ENCODE measurements at regions of chr6 and their contacts with region 1.

Region 1: GRCh38 chr6:150079604-150080003 is 10.7 kb upstream of the ULBP3 start:
- DNase-seq: peak in 1 of 10 donors; percentile 82

Region 2: DNA sequence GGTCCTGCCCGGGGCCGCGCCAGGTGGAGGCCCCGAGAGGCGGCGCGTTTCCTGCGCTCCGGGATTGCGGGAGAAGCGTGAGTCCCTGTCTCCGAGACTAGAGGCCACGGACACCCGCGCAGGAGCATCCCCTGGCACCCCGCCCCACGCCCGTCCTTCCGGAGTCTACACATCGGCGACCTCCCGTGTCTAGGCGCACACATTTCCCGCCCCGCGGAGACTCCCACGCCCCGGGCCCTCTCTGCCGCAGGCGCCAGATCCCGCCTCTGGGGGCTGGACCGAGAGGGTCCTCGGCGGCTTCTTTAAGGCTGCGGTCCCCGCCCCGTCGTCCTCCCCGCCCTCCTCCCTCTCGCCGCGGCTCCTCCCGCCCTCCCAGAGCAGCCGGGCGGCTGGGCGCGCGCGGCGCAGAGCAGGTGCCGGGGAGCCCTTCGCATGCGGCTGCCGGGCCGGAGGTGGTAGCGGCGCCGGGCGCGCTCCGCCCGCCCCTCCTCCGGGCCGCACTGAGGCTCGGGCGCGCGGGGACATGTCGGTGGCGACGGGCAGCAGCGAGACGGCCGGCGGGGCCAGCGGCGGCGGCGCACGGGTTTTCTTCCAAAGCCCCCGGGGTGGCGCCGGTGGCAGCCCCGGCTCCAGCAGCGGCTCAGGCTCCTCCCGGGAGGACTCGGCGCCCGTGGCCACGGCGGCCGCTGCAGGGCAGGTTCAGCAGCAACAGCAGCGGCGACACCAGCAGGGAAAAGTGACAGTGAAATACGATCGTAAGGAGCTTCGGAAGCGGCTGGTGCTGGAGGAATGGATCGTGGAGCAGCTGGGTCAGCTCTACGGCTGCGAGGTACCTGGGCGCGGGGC is 63.3 kb after region 1 on chr6 and contains the start of gene PPP1R14C:
- intact Hi-C with region 1: loop called (anchors 5 kb)
- DNase-seq: peak; percentile 26 to 95 (median 66)

Region 3: DNA sequence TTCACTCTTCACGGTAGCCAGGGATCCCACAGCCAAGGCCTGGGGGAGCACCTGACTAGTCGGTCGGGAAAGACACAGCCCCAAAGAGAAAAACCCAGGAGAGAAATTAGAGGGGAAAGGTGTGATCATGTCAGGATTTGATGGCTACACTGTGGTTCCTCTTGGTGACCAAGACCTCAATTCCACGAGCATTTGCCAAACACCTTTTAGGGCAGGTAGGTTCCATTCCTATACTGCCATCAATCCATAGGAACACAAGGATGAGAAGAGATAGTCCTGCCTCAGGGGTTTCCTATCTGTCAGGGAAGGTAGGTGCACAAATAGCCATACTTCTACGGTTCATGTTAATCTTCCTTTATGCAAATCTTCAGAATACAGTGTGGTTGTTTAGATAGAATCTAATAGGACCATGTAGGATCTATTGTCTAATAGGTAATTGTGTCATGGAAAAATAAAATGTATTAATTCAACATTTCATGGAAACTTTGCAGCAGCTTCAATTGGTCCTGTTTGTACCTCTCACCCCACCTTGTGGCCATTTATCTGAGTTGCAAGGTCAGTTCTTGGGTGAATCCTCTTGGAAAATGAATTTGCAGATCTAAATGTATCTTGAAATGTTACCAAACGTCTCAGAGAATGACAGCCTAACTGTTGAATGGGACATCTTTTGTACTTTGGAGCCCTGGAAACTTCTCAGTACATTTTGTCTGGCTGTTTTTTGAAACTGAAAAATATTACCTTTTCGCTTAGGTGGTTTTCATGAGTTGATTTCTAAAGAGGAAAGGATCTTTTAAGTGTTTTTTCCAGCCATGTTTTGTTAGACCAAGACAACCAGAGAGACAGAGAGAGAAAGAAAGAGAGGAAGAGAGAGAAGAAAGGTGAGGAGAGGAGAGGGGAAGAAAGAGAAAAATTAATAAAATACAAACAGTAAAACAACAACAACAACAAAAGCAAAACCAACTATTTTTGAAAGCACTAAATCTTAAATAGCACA is 255.5 kb after region 1 on chr6:
- intact Hi-C with region 1: loop called (anchors 1 kb)
- DNase-seq: peak in 3 of 10 donors; percentile 26 to 41 (median 35)

Region 4: GRCh38 chr6:150395398-150396009 is 315.9 kb after region 1 on chr6:
- intact Hi-C with region 1: loop called (anchors 1 kb)
- DNase-seq: peak in 9 of 10 donors; percentile 13 to 91 (median 50)

Region 5: GRCh38 chr6:150813319-150813992 is 733.9 kb after region 1 on chr6:
- intact Hi-C with region 1: loop called (anchors 10 kb)
- DNase-seq: peak in 1 of 10 donors; percentile 16

Measured in posterior cingulate gyrus (tissue), 11 donors.